Heart left ventricle (tissue), 16 donors: ENCODE measurements at regions of chr17 and their contacts with region 1.

Region 1: GRCh38 chr17:44260296-44260695 is 7.6 kb downstream of the SLC4A1 start:
- DNase-seq: no peak
- ATAC-seq: no peak
- H3K4me3 ChIP-seq: no peak overlapping the region
- H3K27ac ChIP-seq: no peak overlapping the region
- H3K4me1 ChIP-seq: no peaks in the 10 kb centered on the region
- H3K27me3 ChIP-seq: no peaks in the 10 kb centered on the region
- CTCF ChIP-seq: no peak
- POLR2A ChIP-seq: no peak

Region 2: GRCh38 chr17:44024271-44024663 is 236.0 kb before region 1 on chr17:
- intact Hi-C with region 1: no loop called
- DNase-seq: no peak
- ATAC-seq: peak in 2 of 4 donors; percentile 11 to 56
- H3K4me3 ChIP-seq: no peak overlapping the region
- H3K27ac ChIP-seq: no peak overlapping the region
- H3K4me1 ChIP-seq: no peaks in the 10 kb centered on the region
- H3K27me3 ChIP-seq: no peaks in the 10 kb centered on the region
- CTCF ChIP-seq: no peak
- POLR2A ChIP-seq: no peak

Region 3: GRCh38 chr17:44210342-44211192 is 49.7 kb before region 1 on chr17:
- intact Hi-C with region 1: no loop called
- DNase-seq: peak; percentile 88 to 95 (median 90)
- ATAC-seq: peak; percentile 85 to 94 (median 92)
- H3K4me3 ChIP-seq: peak overlapping the region in 4 of 12 donors; percentile 5 to 33 (median 13)
- H3K27ac ChIP-seq: peak overlapping the region in 10 of 12 donors; percentile 30 to 73 (median 51)
- H3K4me1 ChIP-seq: peaks cover 3 to 22% (median 12%) of the 10 kb centered on the region in 12 donors
- H3K27me3 ChIP-seq: no peaks in the 10 kb centered on the region
- CTCF ChIP-seq: peak; percentile 97 to 100 (median 99)
- POLR2A ChIP-seq: peak in 1 of 2 donors; percentile 40

Region 4: DNA sequence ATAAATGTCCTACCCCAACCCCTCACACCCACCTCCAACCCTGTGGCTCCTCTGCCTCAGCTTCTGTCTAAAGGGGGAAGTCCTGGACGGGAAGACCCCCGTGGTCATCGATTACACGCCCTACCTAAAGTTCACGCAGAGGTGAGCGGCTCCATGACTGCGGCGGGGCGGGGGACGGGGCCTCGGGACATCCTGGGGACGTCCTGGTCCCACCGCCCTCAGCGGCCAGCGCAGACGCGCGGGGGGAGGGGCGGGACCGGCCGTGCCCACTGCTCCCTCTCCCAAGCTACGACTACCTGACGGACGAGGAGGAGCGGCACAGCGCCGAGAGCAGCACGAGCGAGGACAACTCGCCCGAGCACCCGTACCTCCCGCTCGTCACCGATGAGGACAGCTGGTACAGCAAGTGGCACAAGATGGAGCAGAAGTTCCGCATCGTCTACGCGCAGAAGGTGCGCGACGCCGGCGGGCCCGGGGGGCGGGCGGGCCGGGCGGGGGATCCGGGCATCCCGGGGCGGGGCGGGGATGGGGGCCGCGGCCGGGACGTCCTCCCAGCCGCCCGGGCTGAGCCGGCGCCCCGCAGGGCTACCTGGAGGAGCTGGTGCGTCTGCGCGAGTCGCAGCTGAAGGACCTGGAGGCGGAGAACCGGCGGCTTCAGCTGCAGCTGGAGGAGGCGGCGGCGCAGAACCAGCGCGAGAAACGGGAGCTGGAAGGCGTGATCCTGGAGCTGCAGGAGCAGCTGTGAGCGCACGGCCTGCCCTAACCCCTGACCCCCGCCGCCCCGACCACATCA is 54.8 kb after region 1 on chr17:
- intact Hi-C with region 1: loop called in 1 of 10 experiments (anchors 5 kb)
- DNase-seq: no peak
- ATAC-seq: no peak
- H3K4me3 ChIP-seq: peak overlapping the region in 9 of 12 donors; percentile 22 to 48 (median 34)
- H3K27ac ChIP-seq: no peak overlapping the region
- H3K4me1 ChIP-seq: peaks cover 0 to 12% (median 4%) of the 10 kb centered on the region in 12 donors
- H3K27me3 ChIP-seq: peaks cover 22 to 54% (median 46%) of the 10 kb centered on the region in 9 donors
- CTCF ChIP-seq: no peak
- POLR2A ChIP-seq: no peak